Heart right ventricle (tissue), 16 donors: ENCODE measurements at regions of chr1 and their contacts with region 1.

Region 1: DNA sequence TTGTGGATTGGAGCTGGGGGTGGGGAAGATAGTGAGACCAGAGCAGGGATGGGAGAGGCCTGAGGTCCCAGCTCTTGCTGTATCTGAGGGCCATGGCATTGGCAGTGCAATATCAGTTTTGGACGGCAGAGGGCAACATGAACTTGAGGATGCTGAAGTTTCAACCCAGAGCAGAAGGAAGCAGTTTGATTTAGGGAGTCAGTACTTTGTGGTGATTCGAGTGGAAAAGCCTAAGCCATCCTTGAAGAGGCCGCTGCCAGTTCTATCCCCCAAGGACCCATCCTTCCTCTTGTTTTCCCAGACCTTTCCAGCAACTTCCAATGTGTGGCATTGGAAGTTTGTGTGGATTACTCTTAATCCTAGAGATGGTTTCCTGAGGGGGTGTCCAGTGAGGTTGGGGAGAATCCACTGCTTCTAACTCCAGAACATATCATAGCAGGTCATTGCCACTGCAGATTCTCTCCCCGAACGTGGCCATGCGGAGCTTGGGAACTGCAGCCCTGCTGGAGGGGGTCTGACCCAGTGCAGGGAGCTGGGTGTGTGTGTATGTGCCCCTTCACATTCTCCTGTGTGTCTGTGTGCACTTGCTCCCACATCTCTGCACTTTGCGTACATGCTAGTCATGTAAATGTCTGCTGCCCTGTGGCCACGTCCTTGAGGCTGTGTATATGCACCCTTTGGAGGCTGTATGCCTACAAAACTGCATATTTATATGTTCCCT is 24.1 kb downstream of the SLC26A9 start:
- DNase-seq: peak; percentile 71 to 88
- ATAC-seq: peak; percentile 35 to 77 (median 66)
- H3K4me3 ChIP-seq: peak overlapping the region in 5 of 10 donors; percentile 2 to 26 (median 9)
- H3K27ac ChIP-seq: peak overlapping the region; percentile 67 to 90 (median 82)
- H3K4me1 ChIP-seq: peaks cover 4 to 67% (median 35%) of the 10 kb centered on the region in 9 donors
- H3K27me3 ChIP-seq: no peaks in the 10 kb centered on the region
- CTCF ChIP-seq: peak; percentile 81 to 95 (median 90)

Region 2: GRCh38 chr1:205668951-205669340 is 250.2 kb before region 1 on chr1:
- intact Hi-C with region 1: loop called in 1 of 10 experiments (anchors 10 kb)
- DNase-seq: no peak
- ATAC-seq: no peak
- H3K4me3 ChIP-seq: no peak overlapping the region
- H3K27ac ChIP-seq: no peak overlapping the region
- H3K4me1 ChIP-seq: peaks cover 0 to 36% (median 12%) of the 10 kb centered on the region in 9 donors
- H3K27me3 ChIP-seq: peaks cover 0 to 3% (median 0%) of the 10 kb centered on the region in 7 donors
- CTCF ChIP-seq: no peak

Region 3: DNA sequence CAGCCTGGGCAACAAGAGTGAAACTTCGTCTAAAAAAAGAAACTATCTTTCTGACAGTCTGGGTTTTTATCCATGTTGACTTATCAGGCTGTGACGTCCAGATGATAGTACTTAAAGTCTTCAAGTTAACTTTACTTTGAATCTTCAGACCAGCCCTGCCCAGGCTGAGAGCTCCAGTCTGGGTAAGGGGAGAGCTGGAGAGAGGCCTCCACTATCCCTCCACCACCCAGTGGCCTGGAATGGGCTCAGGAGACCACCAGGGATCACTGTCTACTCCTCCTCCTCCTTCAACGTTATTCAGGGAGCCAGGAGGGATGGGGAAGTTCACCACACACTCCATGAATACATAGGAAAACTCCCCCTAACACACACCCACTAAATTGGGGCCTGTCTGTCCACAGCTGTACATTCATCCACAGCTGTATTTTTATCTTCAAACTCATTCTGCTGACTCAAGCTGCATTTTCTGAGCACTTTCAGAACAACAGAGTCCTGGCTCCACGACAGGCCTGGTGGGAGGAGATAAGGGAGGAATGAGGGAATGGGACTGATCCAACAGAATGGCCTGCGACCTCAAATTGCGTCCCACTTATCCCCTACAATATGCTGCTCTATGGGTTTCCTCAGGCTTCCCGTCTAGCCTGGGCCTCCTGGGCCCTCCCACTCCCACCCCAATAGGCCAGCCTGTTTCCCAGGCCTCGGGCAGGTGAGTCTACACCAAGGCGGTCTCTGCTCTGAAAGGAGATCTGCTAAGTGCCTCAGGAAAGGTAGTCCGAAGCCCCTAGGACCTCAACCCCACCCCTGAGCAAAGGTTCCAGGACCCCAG is 240.7 kb before region 1 on chr1:
- intact Hi-C with region 1: loop called in 1 of 10 experiments (anchors 5 kb)
- DNase-seq: peak; percentile 34 to 40
- ATAC-seq: peak; percentile 40 to 76 (median 52)
- H3K4me3 ChIP-seq: peak overlapping the region in 7 of 10 donors; percentile 58 to 71 (median 65)
- H3K27ac ChIP-seq: peak overlapping the region; percentile 3 to 74 (median 61)
- H3K4me1 ChIP-seq: peaks cover 6 to 46% (median 18%) of the 10 kb centered on the region in 9 donors
- H3K27me3 ChIP-seq: peaks cover 0 to 25% (median 0%) of the 10 kb centered on the region in 7 donors
- CTCF ChIP-seq: no peak

Region 4: GRCh38 chr1:205791568-205792180 is 127.5 kb before region 1 on chr1:
- intact Hi-C with region 1: loop called in 7 of 10 experiments (anchors 5 kb)
- DNase-seq: peak; percentile 38 to 67
- ATAC-seq: peak; percentile 62 to 83 (median 76)
- H3K4me3 ChIP-seq: no peak overlapping the region
- H3K27ac ChIP-seq: peak overlapping the region in 2 of 10 donors; percentile 15 to 28
- H3K4me1 ChIP-seq: peaks cover 0 to 32% (median 5%) of the 10 kb centered on the region in 9 donors
- H3K27me3 ChIP-seq: no peaks in the 10 kb centered on the region
- CTCF ChIP-seq: peak; percentile 31 to 82 (median 79)

Region 5: DNA sequence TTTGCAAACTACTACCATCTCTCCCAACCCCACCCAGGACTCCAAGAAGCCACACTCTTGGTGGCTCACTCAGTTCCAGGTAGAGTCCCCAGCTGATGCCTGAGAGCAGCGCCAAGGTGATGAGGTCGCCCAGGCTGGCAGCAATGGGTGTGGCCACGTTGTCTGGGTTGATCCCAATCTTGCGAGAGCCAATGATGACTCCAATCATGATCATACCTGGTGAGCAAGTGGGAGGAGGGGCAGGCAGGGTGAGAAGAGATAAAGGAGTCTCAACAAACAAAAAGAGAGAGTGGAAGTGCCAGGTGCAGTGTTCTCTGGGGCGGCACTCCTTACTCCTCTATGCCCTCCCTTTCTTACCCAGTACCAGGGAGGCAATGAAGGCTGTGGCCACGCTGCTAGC is 120.6 kb before region 1 on chr1:
- intact Hi-C with region 1: loop called in 7 of 10 experiments (anchors 5 kb)
- DNase-seq: no peak
- ATAC-seq: no peak
- H3K4me3 ChIP-seq: no peak overlapping the region
- H3K27ac ChIP-seq: no peak overlapping the region
- H3K4me1 ChIP-seq: peaks cover 3 to 69% (median 26%) of the 10 kb centered on the region in 9 donors
- H3K27me3 ChIP-seq: no peaks in the 10 kb centered on the region
- CTCF ChIP-seq: no peak

Region 6: GRCh38 chr1:205812878-205813754 is 106.1 kb before region 1 on chr1 and contains the start of gene SLC41A1:
- intact Hi-C with region 1: loop called in 5 of 10 experiments (anchors 5 kb)
- DNase-seq: peak; percentile 91 to 94
- ATAC-seq: peak; percentile 88 to 95 (median 92)
- H3K4me3 ChIP-seq: peak within 1 kb of the TSS; percentile 65 to 93 (median 77)
- H3K27ac ChIP-seq: peak within 1 kb of the TSS; percentile 69 to 95 (median 92)
- H3K4me1 ChIP-seq: peaks cover 0 to 73% (median 38%) of the 10 kb centered on the region in 9 donors
- H3K27me3 ChIP-seq: peaks cover 0 to 8% (median 0%) of the 10 kb centered on the region in 7 donors
- CTCF ChIP-seq: no peak
- total RNA-seq, gene SLC41A1: 247 to 566 (median 322) TPM

Region 7: GRCh38 chr1:205986252-205986651 is 67.1 kb after region 1 on chr1:
- intact Hi-C with region 1: no loop called
- DNase-seq: no peak
- ATAC-seq: no peak
- H3K4me3 ChIP-seq: no peak overlapping the region
- H3K27ac ChIP-seq: peak overlapping the region in 1 of 10 donors; percentile 26
- H3K4me1 ChIP-seq: peaks cover 0 to 49% (median 15%) of the 10 kb centered on the region in 9 donors
- H3K27me3 ChIP-seq: no peaks in the 10 kb centered on the region
- CTCF ChIP-seq: peak in 2 of 9 donors; percentile 9

Region 8: DNA sequence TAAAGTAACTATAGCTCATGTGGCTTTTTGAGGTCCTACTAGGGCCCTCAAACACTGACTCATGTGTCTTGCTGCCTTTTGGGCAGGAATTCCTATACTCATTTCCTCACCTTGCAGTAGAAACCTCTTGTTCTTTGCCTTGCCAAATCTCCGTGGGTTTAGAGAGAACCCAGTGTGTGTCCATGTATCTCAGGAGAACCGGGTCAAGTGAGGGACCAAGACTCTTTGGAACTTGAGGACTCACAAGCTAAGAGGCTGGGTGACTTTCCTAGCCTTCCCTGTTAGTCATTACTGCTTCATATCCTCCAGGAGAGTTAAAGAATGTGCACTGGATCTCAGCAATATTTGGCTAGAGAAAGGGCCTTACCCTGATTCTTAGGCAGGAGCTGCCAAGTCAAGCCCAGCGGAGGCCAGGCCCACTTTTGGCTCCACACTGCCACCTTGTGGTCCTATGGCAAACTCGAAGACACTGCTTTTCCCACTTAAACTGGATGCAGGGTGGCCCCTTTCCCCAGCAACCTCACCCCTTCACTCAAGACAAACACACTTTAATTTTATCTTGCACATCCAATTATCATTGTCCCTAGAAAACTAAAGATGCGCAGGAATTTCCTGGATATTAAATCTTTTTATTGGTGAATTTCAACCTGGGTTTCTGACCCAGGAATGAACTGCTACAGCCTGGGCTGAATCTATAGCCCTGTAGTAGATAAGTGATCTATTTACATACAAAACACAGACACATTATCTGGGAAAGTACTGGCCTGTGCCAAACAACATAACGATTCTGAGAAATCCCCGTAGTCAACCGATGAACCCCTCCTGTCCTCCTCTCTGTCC is 187.4 kb after region 1 on chr1:
- intact Hi-C with region 1: loop called (anchors 1 to 10 kb)
- DNase-seq: peak; percentile 73 to 82
- ATAC-seq: peak; percentile 82 to 93 (median 88)
- H3K4me3 ChIP-seq: no peak overlapping the region
- H3K27ac ChIP-seq: no peak overlapping the region
- H3K4me1 ChIP-seq: peaks cover 0 to 22% (median 0%) of the 10 kb centered on the region in 9 donors
- H3K27me3 ChIP-seq: peaks cover 0 to 5% (median 0%) of the 10 kb centered on the region in 7 donors
- CTCF ChIP-seq: peak; percentile 86 to 92 (median 91)